KBM-7 (cell line): ENCODE measurements at regions of chr12 and their contacts with region 1.

Region 1: GRCh38 chr12:82326905-82327503 is 31.2 kb downstream of the CCDC59 start:
- DNase-seq: peak; percentile 20

Region 2: GRCh38 chr12:81668475-81668874 is 658.5 kb before region 1 on chr12:
- in situ Hi-C with region 1: loop called (anchors 25 kb)
- DNase-seq: no peak

Region 3: GRCh38 chr12:82608706-82609105 is 281.7 kb after region 1 on chr12:
- in situ Hi-C with region 1: no loop called
- DNase-seq: no peak

Region 4: DNA sequence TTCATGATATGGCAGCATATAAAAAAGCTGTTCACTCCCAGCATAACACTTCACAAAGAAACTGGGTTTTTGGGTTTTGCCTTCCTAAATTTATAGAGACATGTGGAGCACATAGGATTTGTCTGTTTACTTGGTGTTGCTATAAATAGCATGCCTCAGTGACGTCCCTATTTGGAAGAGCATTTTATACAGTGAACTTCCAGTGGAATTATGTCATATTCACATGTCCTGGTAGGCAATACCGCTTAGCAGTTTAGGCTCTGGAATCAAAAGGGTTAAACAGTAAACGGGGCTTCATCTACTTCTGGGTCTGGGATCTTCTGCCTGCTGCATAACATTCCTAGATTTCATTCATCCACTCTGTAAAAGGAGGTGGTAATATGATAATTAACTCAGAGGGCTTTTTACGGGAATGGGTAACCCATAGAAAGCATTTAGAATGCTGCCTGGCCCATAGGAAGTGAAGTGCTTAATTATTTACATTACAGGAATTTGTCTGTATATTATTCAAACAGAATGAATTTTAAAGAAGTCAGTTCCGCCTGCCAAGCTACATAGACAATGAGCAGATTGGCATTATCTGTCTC is 755.8 kb after region 1 on chr12:
- in situ Hi-C with region 1: no loop called
- DNase-seq: no peak